Prostate gland (tissue), 2 donors: ENCODE measurements at regions of chr16 and their contacts with region 1.

Region 1: DNA sequence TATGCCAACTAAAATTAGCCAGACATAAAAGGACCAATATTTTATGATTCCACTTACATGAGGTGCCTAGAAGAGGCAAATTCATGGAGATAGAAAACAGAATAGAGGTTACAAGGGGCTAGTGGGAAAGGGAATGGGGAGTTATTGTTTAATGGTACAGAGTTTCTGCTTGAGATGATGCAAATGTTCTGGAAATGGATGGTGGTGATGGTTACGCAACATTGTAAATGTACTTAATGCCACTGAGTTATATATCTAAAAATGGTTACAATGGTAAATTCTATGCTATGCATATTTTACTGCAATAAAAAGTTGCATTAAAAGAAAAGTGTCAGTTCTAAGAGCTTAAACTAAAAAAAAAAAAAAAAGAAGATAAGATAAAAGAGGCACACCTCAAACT is 17.9 kb downstream of the MT1X start:
- DNase-seq: no peak
- H3K4me3 ChIP-seq: no peak overlapping the region
- H3K27ac ChIP-seq: no peak overlapping the region
- H3K4me1 ChIP-seq: no peaks in the 10 kb centered on the region
- H3K27me3 ChIP-seq: no peaks in the 10 kb centered on the region
- CTCF ChIP-seq: no peak
- POLR2A ChIP-seq: no peak

Region 2: DNA sequence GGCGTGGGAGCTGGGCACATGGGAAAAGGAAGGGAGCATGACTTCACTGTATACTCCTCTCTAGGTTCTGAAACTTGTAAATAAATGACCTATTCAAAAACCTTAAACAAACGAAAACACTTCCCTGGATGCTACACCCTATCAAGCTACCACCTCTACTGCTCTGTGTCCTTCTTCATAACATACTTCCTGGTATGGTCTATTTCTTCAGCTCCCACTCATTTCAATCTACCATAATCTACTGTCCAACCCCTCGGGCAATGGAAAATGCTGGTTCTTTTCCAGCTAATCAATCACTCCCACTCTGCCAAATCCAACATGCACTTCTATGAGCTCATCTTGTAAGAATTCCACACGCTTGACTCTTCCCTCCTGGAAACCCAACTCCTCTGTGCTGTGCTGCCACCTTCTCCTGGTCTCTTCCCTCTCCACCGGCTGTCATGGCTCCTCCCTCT is 317.3 kb before region 1 on chr16:
- intact Hi-C with region 1: no loop called
- DNase-seq: no peak
- H3K4me3 ChIP-seq: no peak overlapping the region
- H3K27ac ChIP-seq: no peak overlapping the region
- H3K4me1 ChIP-seq: no peaks in the 10 kb centered on the region
- H3K27me3 ChIP-seq: no peaks in the 10 kb centered on the region
- CTCF ChIP-seq: no peak
- POLR2A ChIP-seq: no peak

Region 3: DNA sequence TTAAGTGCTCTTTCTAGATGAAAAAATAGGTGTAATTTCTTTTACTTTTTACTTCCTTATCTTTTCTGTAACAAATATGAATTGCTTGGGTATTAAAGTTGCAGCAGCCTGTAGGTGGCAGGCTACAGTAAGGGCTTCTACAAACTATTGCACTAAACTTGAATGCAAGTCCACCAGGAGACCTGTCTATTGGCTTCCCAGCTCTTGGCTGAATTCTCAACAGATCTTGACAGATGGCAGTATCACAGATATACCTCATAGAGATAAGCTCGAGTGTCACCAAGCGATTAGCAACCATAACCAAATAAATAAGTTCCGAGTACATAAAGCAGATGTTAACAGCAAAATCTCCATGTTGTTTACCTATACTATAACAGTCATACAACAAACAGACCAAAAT is 186.2 kb before region 1 on chr16:
- intact Hi-C with region 1: loop called (anchors 2 kb)
- DNase-seq: peak; percentile 66
- H3K4me3 ChIP-seq: no peak overlapping the region
- H3K27ac ChIP-seq: no peak overlapping the region
- H3K4me1 ChIP-seq: no peaks in the 10 kb centered on the region
- H3K27me3 ChIP-seq: no peaks in the 10 kb centered on the region
- CTCF ChIP-seq: peak; percentile 40 to 84 (median 70)
- POLR2A ChIP-seq: no peak

Region 4: DNA sequence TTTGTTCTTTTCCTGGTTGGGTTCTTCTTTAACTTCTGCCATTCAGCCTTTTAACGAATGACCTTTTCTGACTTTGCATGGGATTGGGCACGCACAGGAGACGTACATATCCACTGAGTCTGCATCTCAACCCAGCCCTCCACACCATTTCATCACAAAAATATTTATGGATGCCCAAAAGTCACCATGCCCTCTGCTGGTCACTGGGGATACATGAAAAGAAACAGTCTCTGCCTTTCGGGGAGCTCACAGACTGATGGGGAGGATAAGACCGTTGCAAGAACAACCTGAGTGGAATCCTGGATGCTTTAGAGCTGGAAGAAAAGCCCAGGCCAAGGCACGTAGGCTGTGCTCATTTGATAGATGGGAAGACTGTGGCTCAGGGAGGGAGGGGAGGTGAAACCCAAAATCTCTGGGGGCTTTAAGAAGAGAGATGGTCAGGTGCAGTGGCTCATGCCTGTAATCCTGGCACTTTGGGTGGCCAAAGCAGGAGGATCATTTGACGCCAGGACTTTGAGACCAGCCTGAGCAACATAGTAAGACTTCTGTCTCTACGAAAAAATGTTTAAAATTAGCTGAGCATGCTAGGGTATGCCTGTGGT is 99.7 kb before region 1 on chr16:
- intact Hi-C with region 1: loop called (anchors 5 kb)
- DNase-seq: peak; percentile 47
- H3K4me3 ChIP-seq: no peak overlapping the region
- H3K27ac ChIP-seq: no peak overlapping the region
- H3K4me1 ChIP-seq: no peaks in the 10 kb centered on the region
- H3K27me3 ChIP-seq: no peaks in the 10 kb centered on the region
- CTCF ChIP-seq: peak; percentile 44 to 74 (median 65)
- POLR2A ChIP-seq: no peak

Region 5: GRCh38 chr16:56673921-56674320 is 26.3 kb before region 1 on chr16:
- intact Hi-C with region 1: loop called (anchors 2 kb)
- DNase-seq: peak; percentile 31
- H3K4me3 ChIP-seq: no peak overlapping the region
- H3K27ac ChIP-seq: no peak overlapping the region
- H3K4me1 ChIP-seq: no peaks in the 10 kb centered on the region
- H3K27me3 ChIP-seq: no peaks in the 10 kb centered on the region
- CTCF ChIP-seq: peak; percentile 43 to 71 (median 59)
- POLR2A ChIP-seq: no peak